ENCODE measurements at regions of chr4 and their contacts with region 1.

Region 1: GRCh38 chr4:68375667-68376559 is 26.0 kb upstream of the YTHDC1 start:
- DNase-seq: no peak
- ATAC-seq: peak; percentile 49

Region 2: DNA sequence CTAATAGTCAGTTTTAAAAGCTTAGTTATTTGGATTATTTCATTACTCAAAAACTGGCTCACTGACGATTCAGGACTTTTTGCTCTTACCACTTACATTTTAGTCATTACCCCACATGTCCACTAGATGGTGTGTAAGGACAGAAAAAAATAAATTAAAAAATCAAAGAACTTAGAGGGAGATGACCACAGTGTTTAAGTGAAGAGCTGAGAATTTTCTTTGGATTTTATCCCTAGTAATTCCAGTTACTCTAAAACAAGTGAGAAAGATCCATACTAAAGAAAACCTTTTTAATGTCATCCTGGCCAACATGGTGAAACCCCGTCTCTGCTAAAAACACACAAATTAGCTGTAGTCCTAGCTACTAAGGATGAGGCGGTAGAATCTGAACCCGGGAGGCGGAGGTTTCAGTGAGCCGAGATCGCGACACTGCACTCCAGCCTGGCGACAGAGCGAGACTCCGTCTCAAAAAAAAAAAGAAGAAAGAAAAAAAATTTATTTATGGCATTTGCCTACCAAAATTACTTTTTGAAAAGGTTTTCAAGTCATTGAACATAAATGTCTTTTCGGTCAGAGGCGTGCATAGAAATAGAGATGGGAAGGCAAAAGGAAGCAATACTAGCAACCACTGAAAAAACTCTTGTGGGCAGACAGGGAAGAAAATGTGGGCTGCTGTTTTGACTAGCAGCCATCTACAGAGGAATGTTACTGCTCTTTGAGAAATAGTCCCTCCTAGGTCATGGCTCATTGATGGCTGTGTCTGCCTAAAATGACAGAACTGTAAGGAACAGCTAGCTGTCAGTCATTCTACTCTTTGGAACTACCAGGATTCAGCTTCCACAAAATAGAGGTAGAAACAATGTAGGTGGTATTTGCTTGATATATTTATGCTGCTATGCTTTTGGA is 103.8 kb before region 1 on chr4:
- intact Hi-C with region 1: loop called (anchors 10 kb)
- DNase-seq: no peak
- ATAC-seq: peak; percentile 76